AG04449 (cell line): ENCODE measurements at regions of chr7 and their contacts with region 1.

Region 1: GRCh38 chr7:40057292-40057691 is 77.1 kb downstream of the MPLKIP start:
- DNase-seq: no peak
- H3K4me3 ChIP-seq: no peak overlapping the region
- CTCF ChIP-seq: no peak

Region 2: DNA sequence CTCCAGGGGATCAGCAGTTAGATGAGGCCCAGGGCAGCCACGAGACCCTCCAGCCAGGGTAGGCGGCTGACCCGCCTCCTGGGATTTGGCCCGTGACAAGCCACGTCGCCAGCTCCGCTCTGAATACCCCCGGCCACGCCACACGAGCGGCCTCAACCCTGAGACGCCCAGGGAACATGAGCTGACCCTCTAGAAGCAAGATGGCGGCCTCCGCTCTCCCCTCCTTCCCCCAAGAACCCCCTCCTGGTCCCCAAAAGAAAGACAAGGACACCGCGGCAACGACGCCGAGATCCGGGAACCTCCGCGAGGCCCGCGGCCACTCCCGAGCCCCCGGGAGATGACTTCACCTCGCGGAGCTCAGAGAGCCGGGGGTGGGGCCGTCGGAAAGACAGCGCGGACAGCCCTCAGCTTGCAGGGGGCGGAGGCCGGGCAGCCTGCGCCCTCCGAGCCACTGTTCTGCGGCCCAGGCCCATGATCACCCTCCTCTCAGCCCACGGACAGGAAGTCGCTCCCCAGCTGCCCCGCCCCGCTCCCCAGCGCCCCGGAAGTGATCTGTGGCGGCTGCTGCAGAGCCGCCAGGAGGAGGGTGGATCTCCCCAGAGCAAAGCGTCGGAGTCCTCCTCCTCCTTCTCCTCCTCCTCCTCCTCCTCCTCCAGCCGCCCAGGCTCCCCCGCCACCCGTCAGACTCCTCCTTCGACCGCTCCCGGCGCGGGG is 434.1 kb before region 1 on chr7 and contains the start of gene RALA:
- CTCF ChIA-PET with region 1: no interaction called
- POLR2A ChIA-PET with region 1: no interaction called
- DNase-seq: peak; percentile 55
- H3K4me3 ChIP-seq: peak within 1 kb of the TSS; percentile 77
- CTCF ChIP-seq: no peak

Region 3: GRCh38 chr7:39948956-39949928 is 108.0 kb before region 1 on chr7:
- CTCF ChIA-PET with region 1: interaction called, 21 read pairs
- POLR2A ChIA-PET with region 1: no interaction called
- DNase-seq: peak; percentile 99
- H3K4me3 ChIP-seq: peak overlapping the region; percentile 92
- CTCF ChIP-seq: no peak

Region 4: DNA sequence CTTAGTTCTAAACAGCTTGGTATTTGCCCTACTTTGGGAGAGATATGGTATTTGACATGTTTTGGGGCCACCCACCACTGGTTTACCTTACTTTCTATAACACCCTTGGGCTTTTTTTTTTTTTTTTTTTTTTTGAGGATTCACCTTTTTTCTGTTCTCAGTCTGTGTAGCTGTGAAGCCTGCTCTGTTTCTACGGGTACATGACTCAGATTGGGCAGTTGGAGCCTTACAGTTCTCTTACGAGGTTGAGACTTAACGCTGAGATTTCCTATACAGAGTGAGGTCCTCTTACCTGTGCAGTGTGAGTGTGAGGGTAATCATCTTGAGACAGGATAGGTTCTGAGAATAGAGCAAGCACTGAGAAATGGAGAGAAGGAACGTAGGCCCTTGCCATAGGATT is 29.7 kb before region 1 on chr7:
- CTCF ChIA-PET with region 1: interaction called, 27 read pairs
- POLR2A ChIA-PET with region 1: no interaction called
- DNase-seq: no peak
- H3K4me3 ChIP-seq: no peak overlapping the region
- CTCF ChIP-seq: no peak

Region 5: DNA sequence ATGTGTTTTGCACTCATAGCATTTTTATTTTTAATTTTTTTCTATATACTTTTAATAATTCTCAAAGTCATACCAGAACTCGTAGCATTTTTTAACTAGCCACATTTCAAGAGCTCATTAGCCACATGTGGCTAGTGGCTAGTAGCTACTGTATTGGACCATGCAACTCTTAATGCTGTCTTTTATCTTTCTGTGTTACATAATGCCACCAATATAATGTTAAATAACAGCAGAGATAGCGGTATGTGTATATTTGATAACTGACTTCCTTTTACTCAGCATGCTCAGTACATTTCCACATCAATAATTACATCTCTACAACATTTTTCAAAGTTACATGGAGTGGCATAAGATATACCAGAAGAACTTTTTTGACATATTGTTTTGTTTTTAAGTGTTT is 15.8 kb before region 1 on chr7:
- CTCF ChIA-PET with region 1: interaction called, 32 read pairs
- POLR2A ChIA-PET with region 1: no interaction called
- DNase-seq: no peak
- H3K4me3 ChIP-seq: no peak overlapping the region
- CTCF ChIP-seq: no peak